ENCODE measurements at regions of chr19 and their contacts with region 1.

Region 1: GRCh38 chr19:2950286-2951124 is 5.7 kb upstream of the ZNF77 start:
- DNase-seq: peak; percentile 99
- CTCF ChIP-seq: no peak

Region 2: GRCh38 chr19:2648528-2648937 is 302.0 kb before region 1 on chr19:
- CTCF ChIA-PET with region 1: interaction called, 18 read pairs
- POLR2A ChIA-PET with region 1: interaction called, 3 read pairs
- DNase-seq: peak; percentile 85
- CTCF ChIP-seq: peak; percentile 86

Region 3: GRCh38 chr19:2962045-2962561 is 11.6 kb after region 1 on chr19:
- CTCF ChIA-PET with region 1: interaction called, 47 read pairs
- POLR2A ChIA-PET with region 1: no interaction called
- DNase-seq: peak; percentile 72
- CTCF ChIP-seq: peak; percentile 60

Region 4: DNA sequence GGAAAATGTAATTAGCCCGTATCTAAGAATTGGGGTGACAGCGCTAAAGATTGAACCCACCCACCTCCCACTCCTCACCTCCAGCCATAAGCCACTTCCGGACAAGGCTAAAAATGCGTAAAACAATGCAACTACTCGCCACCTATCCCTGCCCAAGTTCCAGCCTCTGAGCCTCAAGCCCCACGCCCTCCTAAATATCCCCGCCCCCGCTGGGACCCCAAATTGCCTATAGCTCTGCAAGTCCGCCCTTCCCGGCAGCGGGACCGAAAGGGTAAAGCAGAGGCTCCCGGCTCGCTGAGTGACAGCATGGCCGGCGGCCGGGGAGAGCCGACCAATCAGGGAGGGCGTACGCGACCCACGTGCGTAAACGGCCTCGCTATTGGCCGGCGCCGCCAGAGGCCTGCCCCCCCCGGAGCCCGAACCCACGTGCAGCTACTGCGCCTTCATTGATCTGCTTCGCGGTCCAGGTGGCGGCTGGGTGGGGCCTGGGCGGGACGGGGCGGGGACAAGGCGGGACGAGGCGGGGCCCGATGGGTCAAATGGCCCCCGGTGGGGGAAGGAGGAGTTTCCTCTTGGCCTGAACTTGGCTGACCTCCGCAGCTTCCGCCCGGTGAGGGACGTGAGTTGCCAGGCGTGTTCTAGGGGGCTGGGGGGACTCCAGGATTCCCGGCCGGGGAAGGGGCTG is 26.6 kb after region 1 on chr19 and contains the start of gene TLE6:
- CTCF ChIA-PET with region 1: interaction called, 27 read pairs
- POLR2A ChIA-PET with region 1: interaction called, 4 read pairs
- DNase-seq: peak; percentile 100
- CTCF ChIP-seq: no peak

Region 5: GRCh38 chr19:3075895-3076431 is 125.5 kb after region 1 on chr19:
- CTCF ChIA-PET with region 1: interaction called, 10 read pairs
- POLR2A ChIA-PET with region 1: no interaction called
- DNase-seq: peak; percentile 86
- CTCF ChIP-seq: peak; percentile 96

Region 6: DNA sequence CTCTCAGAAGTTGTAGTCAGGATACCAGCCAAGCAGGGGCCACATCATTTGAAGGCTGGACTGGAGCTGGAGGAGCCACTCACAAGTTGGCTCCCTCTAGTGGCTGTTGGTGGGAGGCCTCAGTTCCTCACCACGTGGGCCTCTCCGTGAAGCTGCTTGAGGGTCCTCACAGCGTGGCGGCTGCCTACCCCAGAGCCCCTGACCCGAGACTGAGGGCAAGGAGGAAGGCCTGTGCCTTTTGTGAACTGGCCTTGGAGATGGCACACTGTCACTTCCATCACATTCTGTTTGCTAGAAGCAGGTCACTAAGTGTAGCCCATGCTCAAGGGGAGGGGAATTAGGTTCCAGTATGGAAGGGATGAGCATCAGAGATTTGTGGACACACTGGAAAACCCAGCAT is 158.3 kb after region 1 on chr19:
- CTCF ChIA-PET with region 1: interaction called, 77 read pairs
- POLR2A ChIA-PET with region 1: interaction called, 3 read pairs
- DNase-seq: peak; percentile 77
- CTCF ChIP-seq: peak; percentile 87

Region 7: DNA sequence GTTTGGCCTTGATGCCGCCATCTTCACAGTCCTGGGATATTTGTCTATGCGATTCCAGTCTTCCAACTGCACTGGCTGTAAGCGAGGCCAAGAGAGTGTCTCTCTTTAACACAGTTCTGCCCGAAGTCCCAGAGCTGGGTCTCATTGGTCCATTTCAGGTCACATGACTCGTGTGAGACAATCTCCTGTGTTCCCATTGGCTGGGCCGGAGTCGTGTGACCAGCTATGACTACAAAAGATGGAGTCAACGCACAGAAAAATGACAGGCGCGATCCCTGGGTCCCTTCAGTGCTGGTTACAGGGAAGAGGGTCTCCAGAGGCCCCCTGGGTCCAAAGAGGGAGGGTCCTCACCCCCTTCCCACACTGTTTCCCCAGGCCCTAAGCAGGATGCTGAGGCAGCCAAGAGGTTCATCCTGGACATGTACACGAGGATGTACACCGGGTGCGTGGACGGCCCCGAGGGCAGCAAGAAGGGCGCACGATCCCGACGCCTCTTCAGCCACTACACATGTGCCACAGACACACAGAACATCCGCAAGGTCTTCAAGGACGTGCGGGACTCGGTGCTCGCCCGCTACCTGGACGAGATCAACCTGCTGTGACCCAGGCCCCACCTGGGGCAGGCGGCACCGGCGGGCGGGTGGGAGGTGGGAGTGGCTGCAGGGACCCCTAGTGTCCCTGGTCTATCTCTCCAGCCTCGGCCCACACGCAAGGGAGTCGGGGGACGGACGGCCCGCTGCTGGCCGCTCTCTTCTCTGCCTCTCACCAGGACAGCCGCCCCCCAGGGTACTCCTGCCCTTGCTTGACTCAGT is 212.1 kb after region 1 on chr19:
- CTCF ChIA-PET with region 1: interaction called, 16 read pairs
- POLR2A ChIA-PET with region 1: no interaction called
- DNase-seq: no peak
- CTCF ChIP-seq: no peak